Activated CD4-positive, alpha-beta T cell treated with anti-CD3 and anti-CD28 coated beads for 36 hours (primary cell): ENCODE measurements at regions of chr5 and their contacts with region 1.

Region 1: GRCh38 chr5:57650360-57651069 is 167.9 kb upstream of the ACTBL2 start:
- DNase-seq: peak; percentile 30
- ATAC-seq: no peak
- H3K4me3 Mint-ChIP-seq: no peak overlapping the region
- H3K27ac Mint-ChIP-seq: no peak overlapping the region
- H3K4me1 Mint-ChIP-seq: no peaks in the 10 kb centered on the region
- H3K27me3 Mint-ChIP-seq: peaks cover 8% of the 10 kb centered on the region

Region 2: DNA sequence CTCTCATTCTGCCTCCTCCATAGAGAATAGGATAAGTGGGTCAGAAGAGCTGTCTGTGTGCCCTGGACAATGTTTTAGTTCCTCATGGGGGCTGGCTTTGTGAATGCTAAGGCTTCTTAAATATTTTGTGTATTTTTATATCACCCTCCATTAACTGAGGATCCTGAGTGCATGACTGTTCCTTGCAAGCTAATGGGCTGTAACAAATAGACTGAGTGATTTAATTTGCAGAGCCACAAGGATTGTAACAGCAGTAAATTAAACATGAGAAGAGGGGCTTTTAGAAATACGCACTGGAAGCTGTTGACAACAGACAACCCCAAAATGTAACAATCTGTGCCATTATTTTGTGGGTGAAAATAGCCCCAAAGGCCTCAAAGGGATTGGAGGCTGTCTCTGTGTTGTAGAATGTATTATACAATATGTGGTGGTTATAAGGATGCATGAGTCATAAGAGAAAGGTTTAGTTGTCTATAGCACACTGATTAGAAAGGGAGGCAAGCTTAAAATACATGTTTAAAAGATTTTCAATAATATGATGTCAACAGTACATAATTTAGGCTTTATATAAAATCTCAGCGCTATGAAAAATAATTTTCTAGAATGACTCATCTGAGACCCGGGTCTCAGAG is 15.3 kb before region 1 on chr5:
- CTCF ChIA-PET with region 1: interaction called, 16 read pairs
- POLR2A ChIA-PET with region 1: no interaction called
- intact Hi-C with region 1: no loop called
- DNase-seq: no peak
- ATAC-seq: no peak
- H3K4me3 Mint-ChIP-seq: no peak overlapping the region
- H3K27ac Mint-ChIP-seq: no peak overlapping the region
- H3K4me1 Mint-ChIP-seq: no peaks in the 10 kb centered on the region
- H3K27me3 Mint-ChIP-seq: peaks cover 4% of the 10 kb centered on the region

Region 3: GRCh38 chr5:58983526-58984452 is 1333.3 kb after region 1 on chr5:
- CTCF ChIA-PET with region 1: no interaction called
- POLR2A ChIA-PET with region 1: no interaction called
- intact Hi-C with region 1: no loop called
- DNase-seq: no peak
- ATAC-seq: no peak
- H3K4me3 Mint-ChIP-seq: no peak overlapping the region
- H3K27ac Mint-ChIP-seq: no peak overlapping the region
- H3K4me1 Mint-ChIP-seq: peaks cover 2% of the 10 kb centered on the region
- H3K27me3 Mint-ChIP-seq: no peaks in the 10 kb centered on the region